Activated CD4-positive, alpha-beta T cell treated with anti-CD3 and anti-CD28 coated beads for 36 hours (primary cell): ENCODE measurements at regions of chr14 and their contacts with region 1.

Region 1: GRCh38 chr14:74852927-74853514 is 22.9 kb downstream of the PROX2 start:
- DNase-seq: no peak
- ATAC-seq: no peak
- H3K4me3 Mint-ChIP-seq: no peak overlapping the region
- H3K27ac Mint-ChIP-seq: no peak overlapping the region
- H3K4me1 Mint-ChIP-seq: peaks cover 10% of the 10 kb centered on the region
- H3K27me3 Mint-ChIP-seq: no peaks in the 10 kb centered on the region

Region 2: DNA sequence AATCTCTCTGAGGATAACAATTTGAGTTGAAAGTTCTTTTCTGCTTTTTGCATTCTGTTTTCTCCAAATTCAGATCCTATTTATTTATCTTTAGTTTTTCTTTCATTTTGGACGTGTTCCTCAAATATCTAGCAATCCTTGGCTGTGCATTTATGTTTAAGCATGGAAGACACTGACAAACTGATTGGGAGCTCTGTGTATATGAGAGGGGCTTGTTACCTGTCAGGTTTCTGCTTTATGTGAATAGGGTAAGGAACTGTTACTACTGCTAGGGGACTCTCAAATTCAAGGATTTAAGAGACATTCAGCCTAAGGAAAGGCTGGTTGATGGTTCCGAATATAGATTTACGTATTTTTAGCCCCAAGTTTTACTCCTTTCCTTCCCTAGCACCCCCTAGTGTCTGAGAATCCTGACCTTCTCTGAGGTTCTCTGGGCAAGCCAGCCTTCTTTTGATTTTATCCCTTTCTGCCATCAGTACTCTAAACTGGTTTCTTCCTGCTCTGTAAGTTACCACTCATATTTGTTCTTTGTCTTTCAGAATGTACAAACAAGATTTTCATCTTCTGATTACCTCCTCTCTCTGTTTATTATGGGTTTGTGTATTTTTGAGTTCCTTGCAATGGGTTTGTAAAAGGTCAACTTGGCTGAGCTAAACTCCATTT is 59.4 kb before region 1 on chr14:
- CTCF ChIA-PET with region 1: no interaction called
- POLR2A ChIA-PET with region 1: no interaction called
- intact Hi-C with region 1: no loop called
- DNase-seq: peak; percentile 19
- ATAC-seq: peak; percentile 61
- H3K4me3 Mint-ChIP-seq: peak overlapping the region; percentile 48
- H3K27ac Mint-ChIP-seq: peak overlapping the region; percentile 82
- H3K4me1 Mint-ChIP-seq: peaks cover 43% of the 10 kb centered on the region
- H3K27me3 Mint-ChIP-seq: no peaks in the 10 kb centered on the region

Region 3: DNA sequence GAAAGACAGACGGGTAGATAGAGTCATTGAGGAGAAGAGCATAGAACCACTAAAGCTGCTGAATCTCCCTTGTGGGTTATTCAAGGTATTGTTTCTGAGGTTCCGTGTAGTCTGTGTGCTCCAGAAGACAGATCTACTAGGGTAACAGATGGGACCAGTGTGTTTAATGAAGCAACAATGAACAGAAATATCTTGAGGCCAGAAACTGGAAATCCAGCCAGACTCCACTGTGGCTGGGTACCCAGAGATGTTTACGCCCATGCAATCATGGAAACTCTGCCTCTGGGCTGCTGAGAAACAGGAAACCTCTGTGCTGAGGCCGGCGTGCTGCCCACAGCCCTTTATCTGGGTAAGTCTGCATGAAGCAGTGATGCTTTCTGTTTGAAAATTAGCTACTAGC is 14.7 kb after region 1 on chr14:
- CTCF ChIA-PET with region 1: interaction called, 80 read pairs
- POLR2A ChIA-PET with region 1: no interaction called
- intact Hi-C with region 1: no loop called
- DNase-seq: peak; percentile 79
- ATAC-seq: peak; percentile 96
- H3K4me3 Mint-ChIP-seq: peak overlapping the region; percentile 3
- H3K27ac Mint-ChIP-seq: peak overlapping the region; percentile 14
- H3K4me1 Mint-ChIP-seq: peaks cover 19% of the 10 kb centered on the region
- H3K27me3 Mint-ChIP-seq: no peaks in the 10 kb centered on the region